ENCODE measurements at regions of chr17 and their contacts with region 1.

Region 1: DNA sequence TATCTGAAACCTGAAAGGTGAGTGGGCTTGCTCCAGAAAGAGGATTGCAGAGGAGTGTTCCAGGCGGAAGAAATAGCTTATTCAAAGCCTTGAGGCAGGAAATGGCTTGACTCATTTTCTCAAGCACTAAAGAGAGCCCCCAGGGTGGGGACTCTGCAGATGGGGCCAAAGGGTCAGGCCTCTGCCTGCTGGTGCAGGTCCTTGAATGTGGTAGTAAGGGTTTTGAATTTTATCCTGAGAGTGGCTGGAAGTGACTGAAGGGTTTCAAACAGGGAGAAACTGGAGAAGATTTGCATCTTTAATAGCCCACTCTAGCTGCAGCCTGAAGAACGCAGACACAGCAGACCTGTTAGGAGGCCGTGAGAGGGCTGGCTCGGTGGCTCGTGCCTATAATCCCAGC is 144.4 kb downstream of the CCT6B start:
- DNase-seq: no peak
- ATAC-seq: no peak
- H3K4me3 ChIP-seq: no peak overlapping the region
- H3K27ac ChIP-seq: no peak overlapping the region
- H3K4me1 ChIP-seq: no peaks in the 10 kb centered on the region
- H3K27me3 ChIP-seq: peaks cover 0 to 19% (median 4%) of the 10 kb centered on the region in 7 donors
- CTCF ChIP-seq: no peak

Region 2: GRCh38 chr17:33968350-33969044 is 848.4 kb before region 1 on chr17:
- intact Hi-C with region 1: no loop called
- DNase-seq: no peak
- ATAC-seq: no peak
- H3K4me3 ChIP-seq: no peak overlapping the region
- H3K27ac ChIP-seq: no peak overlapping the region
- H3K4me1 ChIP-seq: peaks cover 0 to 22% (median 0%) of the 10 kb centered on the region in 9 donors
- H3K27me3 ChIP-seq: peaks cover 0 to 11% (median 5%) of the 10 kb centered on the region in 7 donors
- CTCF ChIP-seq: no peak

Region 3: DNA sequence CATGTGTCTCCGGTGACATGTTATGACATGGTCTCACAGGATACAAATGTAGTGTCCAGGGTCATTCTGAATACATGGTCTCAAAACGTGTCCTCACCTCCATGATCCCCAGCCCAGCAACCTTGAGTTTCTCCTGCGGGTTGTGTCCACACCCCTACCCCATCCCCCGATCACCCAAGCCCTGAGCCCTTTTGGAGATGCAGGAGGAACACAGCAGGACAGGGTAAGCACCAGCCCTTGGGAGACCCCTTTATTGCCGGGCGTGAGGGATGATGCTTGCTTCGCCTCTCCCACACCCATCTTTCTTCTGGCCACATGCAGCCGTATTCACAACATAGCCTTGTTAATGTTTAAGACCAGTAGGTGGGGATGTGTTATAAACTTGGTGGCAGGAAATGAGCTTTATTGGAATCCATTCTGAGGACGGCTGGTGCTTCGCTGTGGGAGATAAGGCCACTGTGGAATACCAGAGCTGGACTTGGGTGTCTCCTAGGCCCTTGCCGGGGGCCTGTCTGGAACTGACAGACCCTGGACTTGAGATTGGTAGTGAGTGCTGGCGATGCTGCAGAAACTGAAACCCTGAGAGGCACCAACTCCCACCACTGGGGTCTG is 231.9 kb before region 1 on chr17:
- intact Hi-C with region 1: loop called in 1 of 10 experiments (anchors 10 kb)
- DNase-seq: no peak
- ATAC-seq: peak in 1 of 8 donors; percentile 35
- H3K4me3 ChIP-seq: no peak overlapping the region
- H3K27ac ChIP-seq: no peak overlapping the region
- H3K4me1 ChIP-seq: peaks cover 9 to 24% (median 19%) of the 10 kb centered on the region in 9 donors
- H3K27me3 ChIP-seq: peaks cover 23 to 99% (median 86%) of the 10 kb centered on the region in 7 donors
- CTCF ChIP-seq: peak in 2 of 9 donors; percentile 21 to 28

Region 4: GRCh38 chr17:34874478-34874877 is 57.6 kb after region 1 on chr17:
- intact Hi-C with region 1: loop called in 1 of 10 experiments (anchors 10 kb)
- DNase-seq: no peak
- ATAC-seq: no peak
- H3K4me3 ChIP-seq: no peak overlapping the region
- H3K27ac ChIP-seq: no peak overlapping the region
- H3K4me1 ChIP-seq: no peaks in the 10 kb centered on the region
- H3K27me3 ChIP-seq: peaks cover 0 to 10% (median 0%) of the 10 kb centered on the region in 7 donors
- CTCF ChIP-seq: no peak

Region 5: GRCh38 chr17:34892461-34893249 is 75.8 kb after region 1 on chr17:
- intact Hi-C with region 1: no loop called
- DNase-seq: no peak
- ATAC-seq: peak in 3 of 8 donors; percentile 44 to 64 (median 51)
- H3K4me3 ChIP-seq: no peak overlapping the region
- H3K27ac ChIP-seq: no peak overlapping the region
- H3K4me1 ChIP-seq: no peaks in the 10 kb centered on the region
- H3K27me3 ChIP-seq: peaks cover 7 to 84% (median 58%) of the 10 kb centered on the region in 7 donors
- CTCF ChIP-seq: peak in 7 of 9 donors; percentile 40 to 58 (median 49)

Measured in heart right ventricle (tissue), 16 donors.